Sigmoid colon (tissue), 7 donors: ENCODE measurements at regions of chr22 and their contacts with region 1.

Region 1: DNA sequence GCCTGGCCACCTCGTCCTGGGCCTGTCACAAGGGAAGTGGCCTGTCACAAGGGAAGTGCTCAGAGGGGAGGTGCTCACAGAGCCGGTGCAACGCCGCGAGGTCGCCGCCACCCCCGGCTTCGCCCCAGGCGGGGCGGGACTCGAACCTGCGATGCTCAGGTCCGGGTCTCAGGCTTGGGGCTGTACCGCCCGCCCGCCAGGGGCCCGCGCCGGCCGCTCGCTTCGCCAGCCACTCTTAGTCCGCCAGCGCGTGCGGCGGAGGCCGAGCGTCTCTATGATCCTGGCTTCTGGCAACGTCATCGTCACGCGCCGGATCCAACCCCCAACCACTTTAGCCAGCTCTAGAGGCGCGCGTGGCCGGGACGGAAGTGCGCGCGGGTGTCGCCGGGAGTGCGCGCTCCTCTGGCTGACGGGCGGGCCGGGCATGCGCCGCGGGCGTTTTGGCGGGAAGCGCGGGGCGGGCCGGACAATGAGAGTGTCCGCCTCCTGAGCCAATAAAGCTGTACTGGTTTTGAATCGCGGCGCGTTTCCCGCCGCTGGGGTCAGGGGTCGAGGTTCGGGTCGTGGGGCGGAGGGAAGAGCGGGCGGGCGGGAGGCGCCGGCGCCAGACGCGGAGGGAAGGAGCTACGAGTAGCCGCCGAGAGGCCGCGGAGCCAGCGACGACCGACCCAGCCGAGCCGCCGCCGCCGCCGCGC is at the start of gene TRMT2A:
- DNase-seq: peak; percentile 99
- H3K4me3 ChIP-seq: peak within 1 kb of the TSS; percentile 67 to 93 (median 86)
- H3K27ac ChIP-seq: peak within 1 kb of the TSS; percentile 83 to 91 (median 88)
- H3K4me1 ChIP-seq: peaks cover 0 to 52% (median 44%) of the 10 kb centered on the region in 4 donors
- H3K27me3 ChIP-seq: no peaks in the 10 kb centered on the region
- CTCF ChIP-seq: no peak
- EP300 ChIP-seq: peak in 1 of 4 donors; percentile 47
- POLR2A ChIP-seq: peak in 1 of 2 donors; percentile 36
- total RNA-seq, gene TRMT2A: 40.0 to 55.1 (median 51.1) TPM

Region 2: DNA sequence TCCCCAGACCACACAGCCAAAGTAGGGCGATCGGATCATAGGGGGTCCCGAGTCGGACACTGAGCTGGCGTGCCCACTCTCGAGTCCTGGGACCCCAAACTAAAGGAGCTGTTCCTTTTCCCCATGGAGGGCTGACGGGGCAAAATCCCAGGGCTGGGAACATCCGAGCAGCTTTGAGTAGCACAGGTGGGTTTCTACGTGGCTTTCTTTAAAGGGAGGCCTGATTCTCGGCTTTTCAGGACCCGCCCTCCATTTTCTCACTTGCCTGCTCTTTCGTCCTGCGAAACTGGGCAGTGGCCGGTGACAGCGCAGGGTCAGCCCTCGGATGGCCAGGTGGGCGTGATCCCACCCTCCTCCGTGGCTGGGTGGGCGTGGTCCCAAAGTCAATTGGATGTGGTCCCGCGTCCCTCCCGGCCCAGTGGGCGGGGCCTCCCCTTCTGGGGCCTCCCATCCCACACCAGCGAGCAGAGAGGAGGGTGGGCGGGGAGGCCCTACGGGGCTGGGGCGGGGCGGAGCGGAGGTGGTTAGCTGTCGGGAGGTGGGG is 158.0 kb before region 1 on chr22:
- intact Hi-C with region 1: loop called (anchors 10 kb)
- DNase-seq: peak; percentile 88
- H3K4me3 ChIP-seq: peak overlapping the region in 3 of 4 donors; percentile 4 to 40 (median 30)
- H3K27ac ChIP-seq: peak overlapping the region; percentile 55 to 69 (median 68)
- H3K4me1 ChIP-seq: peaks cover 0 to 51% (median 38%) of the 10 kb centered on the region in 4 donors
- H3K27me3 ChIP-seq: no peaks in the 10 kb centered on the region
- CTCF ChIP-seq: no peak
- EP300 ChIP-seq: no peak
- POLR2A ChIP-seq: no peak

Region 3: DNA sequence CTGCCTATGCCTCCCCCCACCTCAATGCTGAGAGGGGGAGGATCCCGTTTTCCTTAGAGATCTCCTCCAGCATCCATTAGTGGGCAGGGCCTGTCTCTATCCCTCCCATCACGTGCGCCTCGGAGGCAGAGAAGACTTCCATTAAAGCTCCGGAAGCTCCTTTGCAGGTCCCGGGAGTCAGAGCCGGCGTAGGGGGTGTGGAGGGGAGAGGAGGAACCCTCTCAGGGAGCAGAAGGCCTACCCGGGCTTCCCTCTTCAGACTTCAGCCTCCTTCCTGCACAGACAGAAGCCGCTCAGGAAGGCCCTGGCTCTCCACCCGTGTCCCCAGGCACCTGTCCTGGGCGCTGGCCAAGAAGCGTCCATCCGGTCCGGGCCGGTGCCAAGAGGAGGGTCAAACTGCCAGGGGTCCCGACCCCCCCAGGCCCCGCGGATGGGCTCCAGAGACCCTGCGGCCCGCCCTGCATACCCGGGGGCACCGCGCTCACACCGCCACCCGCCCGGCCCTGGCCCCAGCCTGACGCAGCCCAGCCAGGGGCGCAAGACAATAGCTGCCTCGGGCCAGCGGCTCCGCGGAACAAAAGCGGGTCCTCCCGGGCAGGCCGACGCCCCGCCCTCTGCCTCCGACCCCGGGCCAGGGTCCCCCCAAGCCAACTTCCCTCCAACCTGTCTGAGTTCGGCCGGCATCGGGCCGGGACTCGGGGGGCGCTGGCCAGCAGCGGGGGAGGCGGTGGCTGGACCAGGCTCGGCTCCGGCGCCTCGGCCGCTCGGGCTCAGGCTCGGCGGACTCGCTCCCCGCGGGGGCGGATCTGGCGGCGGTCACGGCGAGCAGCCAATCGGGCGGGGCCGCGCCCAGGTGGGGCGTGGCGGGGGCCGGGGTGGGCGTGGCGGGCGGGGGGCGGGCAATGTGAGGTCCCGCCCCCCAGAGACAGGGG is 130.4 kb before region 1 on chr22:
- intact Hi-C with region 1: loop called (anchors 10 kb)
- DNase-seq: peak; percentile 89
- H3K4me3 ChIP-seq: peak overlapping the region; percentile 55 to 87 (median 62)
- H3K27ac ChIP-seq: peak overlapping the region; percentile 79 to 93 (median 89)
- H3K4me1 ChIP-seq: peaks cover 0 to 57% (median 52%) of the 10 kb centered on the region in 4 donors
- H3K27me3 ChIP-seq: no peaks in the 10 kb centered on the region
- CTCF ChIP-seq: no peak
- EP300 ChIP-seq: no peak
- POLR2A ChIP-seq: peak; percentile 48 to 70

Region 4: GRCh38 chr22:20020533-20021195 is 96.4 kb before region 1 on chr22 and contains the start of gene TANGO2:
- intact Hi-C with region 1: loop called (anchors 5 kb)
- DNase-seq: peak; percentile 94
- H3K4me3 ChIP-seq: peak within 1 kb of the TSS; percentile 94 to 99 (median 96)
- H3K27ac ChIP-seq: peak within 1 kb of the TSS; percentile 88 to 91 (median 88)
- H3K4me1 ChIP-seq: peaks cover 0 to 43% (median 34%) of the 10 kb centered on the region in 4 donors
- H3K27me3 ChIP-seq: no peaks in the 10 kb centered on the region
- CTCF ChIP-seq: no peak
- EP300 ChIP-seq: no peak
- POLR2A ChIP-seq: peak in 1 of 2 donors; percentile 16
- total RNA-seq, gene TANGO2: 24.2 to 36.6 (median 31.9) TPM

Region 5: DNA sequence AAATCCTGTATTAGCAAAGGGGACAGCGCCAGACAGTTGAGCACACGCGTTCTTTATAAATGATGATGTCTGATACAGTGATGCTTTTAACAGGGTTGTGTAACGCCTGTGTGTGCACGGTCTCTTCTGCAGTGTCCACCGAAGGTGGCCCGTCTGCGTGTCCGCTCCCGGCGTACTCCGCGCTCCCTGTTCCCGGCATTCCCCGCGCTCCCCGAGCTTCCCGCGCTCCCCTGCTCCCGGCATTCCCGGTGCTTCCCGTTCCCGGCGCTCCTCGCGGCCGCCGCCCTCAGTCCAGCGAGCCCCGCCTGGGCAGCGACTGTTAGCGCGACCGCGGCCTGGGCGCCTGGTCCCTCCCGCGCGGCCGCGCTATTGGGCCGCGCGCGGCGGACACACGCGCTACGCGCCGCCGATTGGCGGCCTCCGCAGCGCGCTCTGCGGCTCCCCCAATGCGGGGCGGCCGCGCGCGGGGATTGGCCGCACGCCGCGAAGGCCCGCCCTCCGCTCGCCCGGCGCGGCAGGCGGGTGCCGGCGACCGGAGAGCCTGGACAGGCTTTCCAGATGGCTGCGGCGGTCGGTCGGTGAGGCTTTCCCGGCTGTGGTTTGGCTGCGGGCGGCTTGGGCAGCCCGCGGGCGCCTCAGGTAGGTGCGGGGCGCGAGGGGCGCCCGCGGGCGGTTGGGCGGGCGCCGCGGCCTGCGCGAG is 37.2 kb before region 1 on chr22 and contains the start of gene DGCR8:
- intact Hi-C with region 1: loop called (anchors 5 kb)
- DNase-seq: peak; percentile 96
- H3K4me3 ChIP-seq: peak within 1 kb of the TSS; percentile 80 to 91 (median 88)
- H3K27ac ChIP-seq: peak within 1 kb of the TSS; percentile 88 to 97 (median 94)
- H3K4me1 ChIP-seq: peaks cover 0 to 47% (median 45%) of the 10 kb centered on the region in 4 donors
- H3K27me3 ChIP-seq: no peaks in the 10 kb centered on the region
- CTCF ChIP-seq: no peak
- EP300 ChIP-seq: peak in 1 of 4 donors; percentile 79
- POLR2A ChIP-seq: peak; percentile 13 to 49
- total RNA-seq, gene DGCR8: 15.0 to 32.7 (median 22.2) TPM

Region 6: GRCh38 chr22:20164863-20165262 is 47.8 kb after region 1 on chr22:
- intact Hi-C with region 1: no loop called
- DNase-seq: no peak
- H3K4me3 ChIP-seq: no peak overlapping the region
- H3K27ac ChIP-seq: no peak overlapping the region
- H3K4me1 ChIP-seq: no peaks in the 10 kb centered on the region
- H3K27me3 ChIP-seq: no peaks in the 10 kb centered on the region
- CTCF ChIP-seq: no peak
- EP300 ChIP-seq: no peak
- POLR2A ChIP-seq: no peak